Mammary epithelial cell (primary cell): ENCODE measurements at regions of chr10 and their contacts with region 1.

Region 1: GRCh38 chr10:69774596-69774995 is 27.1 kb upstream of the COL13A1 start:
- DNase-seq: no peak
- H3K4me3 ChIP-seq: no peak overlapping the region
- H3K27ac ChIP-seq: no peak overlapping the region
- H3K4me1 ChIP-seq: peaks cover 3% of the 10 kb centered on the region
- H3K27me3 ChIP-seq: no peaks in the 10 kb centered on the region
- CTCF ChIP-seq: peak in 1 of 2 donors; percentile 1

Region 2: GRCh38 chr10:69878038-69878437 is 103.4 kb after region 1 on chr10:
- CTCF ChIA-PET with region 1: no interaction called
- dilution Hi-C with region 1: loop called (anchors 5 kb)
- in situ Hi-C with region 1: no loop called
- intact Hi-C with region 1: no loop called
- DNase-seq: no peak
- H3K4me3 ChIP-seq: no peak overlapping the region
- H3K27ac ChIP-seq: no peak overlapping the region
- H3K4me1 ChIP-seq: peaks cover 8% of the 10 kb centered on the region
- H3K27me3 ChIP-seq: no peaks in the 10 kb centered on the region
- CTCF ChIP-seq: no peak